ENCODE measurements at regions of chr9 and their contacts with region 1.

Region 1: DNA sequence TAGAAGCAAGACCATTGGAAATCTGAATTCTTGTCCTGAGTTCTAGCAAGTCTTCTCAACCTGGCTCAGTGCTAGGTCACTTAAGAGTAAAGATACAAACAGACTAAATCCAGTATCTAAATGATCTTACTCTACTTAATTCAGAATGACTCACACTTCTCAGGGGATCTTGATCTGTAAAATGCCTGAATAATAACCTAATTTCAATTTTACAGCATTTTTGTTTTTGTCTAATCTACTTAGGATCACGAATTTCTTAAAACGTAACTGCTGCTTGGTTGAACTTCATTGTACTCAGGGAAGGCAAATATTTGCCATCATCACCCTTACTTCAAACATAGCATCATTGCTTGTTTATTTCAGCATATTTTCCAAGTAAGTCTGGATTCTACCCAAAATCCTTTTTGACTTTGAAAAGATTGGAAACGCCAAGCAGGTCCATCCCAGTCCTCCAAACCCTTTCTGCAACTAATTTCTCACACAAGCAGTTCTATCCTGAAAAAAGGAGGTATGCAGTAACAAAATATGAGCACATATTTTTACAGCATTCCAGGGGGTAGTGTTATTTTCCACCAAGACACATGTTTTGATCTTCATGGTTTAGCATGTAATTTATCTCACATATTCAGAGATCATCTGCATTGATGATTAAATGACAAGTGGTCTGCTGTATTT is 582.6 kb downstream of the PSAT1 start:
- DNase-seq: no peak
- H3K4me3 ChIP-seq: no peak overlapping the region
- H3K27ac ChIP-seq: no peak overlapping the region
- H3K4me1 ChIP-seq: no peaks in the 10 kb centered on the region
- H3K27me3 ChIP-seq: no peaks in the 10 kb centered on the region
- CTCF ChIP-seq: no peak

Region 2: GRCh38 chr9:78909566-78909965 is 30.0 kb after region 1 on chr9:
- intact Hi-C with region 1: loop called (anchors 2 kb)
- DNase-seq: no peak
- H3K4me3 ChIP-seq: no peak overlapping the region
- H3K27ac ChIP-seq: no peak overlapping the region
- H3K4me1 ChIP-seq: no peaks in the 10 kb centered on the region
- H3K27me3 ChIP-seq: no peaks in the 10 kb centered on the region
- CTCF ChIP-seq: no peak